ENCODE measurements at regions of chr3 and their contacts with region 1.

Region 1: GRCh38 chr3:192887047-192887446 is 30.6 kb downstream of the MB21D2 start:
- DNase-seq: no peak
- ATAC-seq: no peak; the same call in 2 of the 3 replicates
- H3K4me3 ChIP-seq: no peak overlapping the region
- H3K27ac ChIP-seq: no peak overlapping the region
- H3K4me1 ChIP-seq: peaks cover 21% of the 10 kb centered on the region
- H3K27me3 ChIP-seq: no peaks in the 10 kb centered on the region
- CTCF ChIP-seq: no peak
- EP300 ChIP-seq: no peak
- POLR2A ChIP-seq: no peak
- RAD21 ChIP-seq: no peak

Region 2: GRCh38 chr3:192825657-192826200 is 61.3 kb before region 1 on chr3:
- CTCF ChIA-PET with region 1: interaction called, 12 read pairs
- POLR2A ChIA-PET with region 1: interaction called, 6 read pairs
- RAD21 ChIA-PET with region 1: interaction called, 5 read pairs
- SMC1A ChIA-PET with region 1: interaction called, 179 read pairs
- in situ Hi-C with region 1: no loop called
- intact Hi-C with region 1: no loop called
- DNase-seq: no peak
- ATAC-seq: peak; percentile 76
- H3K4me3 ChIP-seq: no peak overlapping the region
- H3K27ac ChIP-seq: no peak overlapping the region
- H3K4me1 ChIP-seq: peaks cover 20% of the 10 kb centered on the region
- H3K27me3 ChIP-seq: no peaks in the 10 kb centered on the region
- CTCF ChIP-seq: peak in 2 of 3 experiments; percentile 0 to 20; a peak in 1 of 6 replicates
- EP300 ChIP-seq: peak; percentile 83 to 95; a peak in 3 of 4 replicates
- POLR2A ChIP-seq: no peak
- RAD21 ChIP-seq: 0 out of 2 replicates have a peak, but pooled peaks have one; percentile 14

Region 3: DNA sequence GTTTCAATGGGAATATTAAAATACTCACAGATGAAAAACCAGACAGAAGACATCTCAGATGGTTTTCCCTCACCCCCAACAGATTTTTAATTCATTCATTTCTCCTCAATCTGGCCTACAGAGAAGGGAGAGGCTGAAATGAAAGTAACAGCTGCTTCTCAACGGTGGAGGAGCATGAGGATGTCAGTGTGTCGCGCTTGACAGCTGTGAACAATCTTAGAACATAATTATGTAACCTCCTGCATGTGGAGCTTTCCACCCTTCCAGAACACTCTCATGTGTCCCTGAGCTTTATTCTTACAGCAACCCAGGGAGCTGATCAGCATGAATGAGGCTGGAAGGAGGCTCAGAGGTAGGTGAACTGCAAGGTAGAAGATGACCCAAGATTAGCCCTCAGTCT is 22.1 kb before region 1 on chr3:
- CTCF ChIA-PET with region 1: interaction called, 7 read pairs
- POLR2A ChIA-PET with region 1: interaction called, 10 read pairs
- RAD21 ChIA-PET with region 1: interaction called, 8 read pairs
- SMC1A ChIA-PET with region 1: interaction called, 18 read pairs
- in situ Hi-C with region 1: no loop called
- intact Hi-C with region 1: no loop called
- DNase-seq: no peak
- ATAC-seq: peak; percentile 70
- H3K4me3 ChIP-seq: no peak overlapping the region
- H3K27ac ChIP-seq: peak overlapping the region; percentile 80
- H3K4me1 ChIP-seq: peaks cover 42% of the 10 kb centered on the region
- H3K27me3 ChIP-seq: no peaks in the 10 kb centered on the region
- CTCF ChIP-seq: no peak
- EP300 ChIP-seq: no peak
- POLR2A ChIP-seq: no peak
- RAD21 ChIP-seq: no peak

Region 4: GRCh38 chr3:192899540-192899982 is 12.5 kb after region 1 on chr3:
- CTCF ChIA-PET with region 1: interaction called, 7 read pairs
- POLR2A ChIA-PET with region 1: interaction called, 8 read pairs
- RAD21 ChIA-PET with region 1: interaction called, 23 read pairs
- SMC1A ChIA-PET with region 1: interaction called, 10 read pairs
- in situ Hi-C with region 1: no loop called
- intact Hi-C with region 1: no loop called
- DNase-seq: no peak
- ATAC-seq: peak; percentile 50
- H3K4me3 ChIP-seq: no peak overlapping the region
- H3K27ac ChIP-seq: peak overlapping the region; percentile 70
- H3K4me1 ChIP-seq: peaks cover 49% of the 10 kb centered on the region
- H3K27me3 ChIP-seq: no peaks in the 10 kb centered on the region
- CTCF ChIP-seq: no peak
- EP300 ChIP-seq: no peak
- POLR2A ChIP-seq: 0 out of 2 replicates have a peak, but pooled peaks have one; percentile 2
- RAD21 ChIP-seq: no peak

Region 5: GRCh38 chr3:193023218-193023617 is 136.2 kb after region 1 on chr3:
- CTCF ChIA-PET with region 1: no interaction called
- POLR2A ChIA-PET with region 1: no interaction called
- RAD21 ChIA-PET with region 1: no interaction called
- SMC1A ChIA-PET with region 1: no interaction called
- in situ Hi-C with region 1: no loop called
- intact Hi-C with region 1: no loop called
- DNase-seq: no peak
- ATAC-seq: no peak
- H3K4me3 ChIP-seq: no peak overlapping the region
- H3K27ac ChIP-seq: no peak overlapping the region
- H3K4me1 ChIP-seq: no peaks in the 10 kb centered on the region
- H3K27me3 ChIP-seq: no peaks in the 10 kb centered on the region
- CTCF ChIP-seq: no peak
- EP300 ChIP-seq: no peak
- POLR2A ChIP-seq: no peak
- RAD21 ChIP-seq: no peak

Measured in GM12878 (cell line).